HCT116 (cell line): ENCODE measurements at regions of chr6 and their contacts with region 1.

Region 1: GRCh38 chr6:106339334-106340029 is 13.9 kb upstream of the ATG5 start:
- DNase-seq: peak; percentile 57
- ATAC-seq: peak; percentile 97
- H3K4me3 ChIP-seq: peak overlapping the region in 1 of 2 experiments; percentile 13; a peak in 1 of 4 replicates
- H3K27ac ChIP-seq: no peak overlapping the region
- H3K4me1 ChIP-seq: peaks cover 4 to 13% of the 10 kb centered on the region in 2 experiments; a peak in 2 of 4 replicates
- H3K27me3 ChIP-seq: no peaks in the 10 kb centered on the region
- CTCF ChIP-seq: peak; percentile 82 to 87 (median 84); a peak in 5 of 6 replicates
- POLR2A ChIP-seq: no peak
- RAD21 ChIP-seq: peak; percentile 87

Region 2: GRCh38 chr6:106173124-106173879 is 166.2 kb before region 1 on chr6:
- CTCF ChIA-PET with region 1: no interaction called
- POLR2A ChIA-PET with region 1: no interaction called
- RAD21 ChIA-PET with region 1: no interaction called
- intact Hi-C with region 1: no loop called
- DNase-seq: no peak
- ATAC-seq: no peak
- H3K4me3 ChIP-seq: no peak overlapping the region
- H3K27ac ChIP-seq: no peak overlapping the region
- H3K4me1 ChIP-seq: no peaks in the 10 kb centered on the region
- H3K27me3 ChIP-seq: no peaks in the 10 kb centered on the region
- CTCF ChIP-seq: no peak
- POLR2A ChIP-seq: no peak
- RAD21 ChIP-seq: no peak

Region 3: DNA sequence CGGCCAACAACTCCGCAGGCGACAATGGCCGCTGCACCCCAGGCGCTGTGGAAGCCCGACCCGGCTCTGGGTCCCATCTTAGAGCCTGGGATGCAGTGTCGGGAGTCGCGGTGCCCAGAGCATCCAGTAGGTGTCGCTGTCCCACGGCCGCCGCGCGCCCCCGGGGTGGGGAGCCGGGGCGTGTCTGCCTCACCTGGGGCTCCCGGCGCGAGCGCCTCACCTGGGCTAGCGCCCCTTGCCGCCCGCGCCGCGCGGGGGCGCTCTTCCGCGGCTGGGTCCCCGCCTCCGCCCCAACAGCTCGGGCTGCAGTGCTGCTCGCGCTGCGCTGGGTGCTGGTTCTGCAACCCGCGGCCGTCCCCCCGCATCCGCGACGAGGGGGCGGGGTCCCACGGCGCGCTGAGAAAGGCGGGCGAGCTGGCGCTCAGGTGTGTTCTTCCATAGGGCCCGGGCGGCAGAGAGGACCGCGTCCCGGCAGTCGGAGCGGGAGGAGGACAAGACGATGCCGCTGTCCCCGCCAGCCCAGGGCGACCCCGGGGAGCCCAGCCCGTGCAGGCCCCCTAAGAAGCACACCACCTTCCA is 21.0 kb after region 1 on chr6 and contains the start of gene CRYBG1:
- CTCF ChIA-PET with region 1: interaction called, 17 read pairs
- POLR2A ChIA-PET with region 1: no interaction called
- RAD21 ChIA-PET with region 1: interaction called in 1 of 2 experiments, 3 read pairs
- intact Hi-C with region 1: loop called (anchors 1 kb)
- DNase-seq: peak; percentile 75
- ATAC-seq: peak; percentile 91
- H3K4me3 ChIP-seq: peak within 1 kb of the TSS; percentile 74 to 88
- H3K27ac ChIP-seq: peak within 1 kb of the TSS; percentile 64
- H3K4me1 ChIP-seq: peaks cover 5 to 17% of the 10 kb centered on the region in 2 experiments; a peak in 3 of 4 replicates
- H3K27me3 ChIP-seq: no peaks in the 10 kb centered on the region
- CTCF ChIP-seq: peak; percentile 89 to 90 (median 90)
- POLR2A ChIP-seq: no peak
- RAD21 ChIP-seq: peak; percentile 86
- total RNA-seq, gene CRYBG1: 10.7 TPM

Region 4: GRCh38 chr6:106383573-106383972 is 44.1 kb after region 1 on chr6:
- CTCF ChIA-PET with region 1: no interaction called
- POLR2A ChIA-PET with region 1: no interaction called
- RAD21 ChIA-PET with region 1: no interaction called
- intact Hi-C with region 1: no loop called
- DNase-seq: no peak
- ATAC-seq: no peak
- H3K4me3 ChIP-seq: no peak overlapping the region
- H3K27ac ChIP-seq: no peak overlapping the region
- H3K4me1 ChIP-seq: peaks cover 0 to 14% of the 10 kb centered on the region in 2 experiments; a peak in 2 of 4 replicates
- H3K27me3 ChIP-seq: no peaks in the 10 kb centered on the region
- CTCF ChIP-seq: no peak
- POLR2A ChIP-seq: no peak
- RAD21 ChIP-seq: no peak

Region 5: GRCh38 chr6:106444777-106445507 is 105.5 kb after region 1 on chr6:
- CTCF ChIA-PET with region 1: interaction called, 16 read pairs
- POLR2A ChIA-PET with region 1: no interaction called
- RAD21 ChIA-PET with region 1: no interaction called
- intact Hi-C with region 1: loop called (anchors 1 kb)
- DNase-seq: peak; percentile 45
- ATAC-seq: peak; percentile 87
- H3K4me3 ChIP-seq: no peak overlapping the region
- H3K27ac ChIP-seq: no peak overlapping the region
- H3K4me1 ChIP-seq: no peaks in the 10 kb centered on the region
- H3K27me3 ChIP-seq: no peaks in the 10 kb centered on the region
- CTCF ChIP-seq: peak; percentile 66 to 76 (median 74)
- POLR2A ChIP-seq: no peak
- RAD21 ChIP-seq: peak; percentile 75

Region 6: GRCh38 chr6:106561686-106562405 is 222.4 kb after region 1 on chr6:
- CTCF ChIA-PET with region 1: interaction called, 49 read pairs
- POLR2A ChIA-PET with region 1: interaction called, 3 read pairs
- RAD21 ChIA-PET with region 1: interaction called, 7 to 10 read pairs
- intact Hi-C with region 1: loop called (anchors 1 kb)
- DNase-seq: no peak
- ATAC-seq: 0 out of 2 replicates have a peak, but pooled peaks have one; percentile 28
- H3K4me3 ChIP-seq: no peak overlapping the region
- H3K27ac ChIP-seq: peak overlapping the region; percentile 40; the same call in 1 of the 2 replicates
- H3K4me1 ChIP-seq: peaks cover 33 to 36% of the 10 kb centered on the region in 2 experiments
- H3K27me3 ChIP-seq: no peaks in the 10 kb centered on the region
- CTCF ChIP-seq: no peak
- POLR2A ChIP-seq: no peak
- RAD21 ChIP-seq: no peak

Region 7: GRCh38 chr6:106997390-106998158 is 658.1 kb after region 1 on chr6:
- CTCF ChIA-PET with region 1: interaction called, 11 read pairs
- POLR2A ChIA-PET with region 1: no interaction called
- RAD21 ChIA-PET with region 1: interaction called, 3 read pairs
- intact Hi-C with region 1: loop called (anchors 1 kb)
- DNase-seq: peak; percentile 47
- ATAC-seq: peak; percentile 93
- H3K4me3 ChIP-seq: no peak overlapping the region
- H3K27ac ChIP-seq: no peak overlapping the region
- H3K4me1 ChIP-seq: peaks cover 0 to 5% of the 10 kb centered on the region in 2 experiments; a peak in 1 of 4 replicates
- H3K27me3 ChIP-seq: no peaks in the 10 kb centered on the region
- CTCF ChIP-seq: peak; percentile 72 to 99 (median 98); a peak in 5 of 6 replicates
- POLR2A ChIP-seq: no peak
- RAD21 ChIP-seq: peak; percentile 82

Region 8: DNA sequence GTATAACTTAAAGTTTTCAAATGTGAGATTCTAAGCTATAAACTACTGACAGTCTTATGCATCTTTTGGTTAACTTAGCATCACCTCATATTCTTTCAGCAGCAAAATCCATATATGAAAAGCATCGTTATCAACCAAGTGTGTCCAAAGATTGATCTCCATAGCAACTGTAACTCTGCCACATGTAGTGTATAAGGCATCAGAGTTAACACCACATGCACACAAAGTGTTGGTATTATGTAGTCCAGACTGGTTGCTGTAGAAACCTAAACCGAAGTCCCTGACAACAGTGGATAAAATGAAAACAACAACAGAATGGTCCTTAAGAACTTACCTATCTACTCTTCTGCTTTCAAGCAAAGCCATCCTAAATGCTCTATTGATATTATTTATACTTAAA is 1080.3 kb after region 1 on chr6:
- CTCF ChIA-PET with region 1: no interaction called
- POLR2A ChIA-PET with region 1: no interaction called
- RAD21 ChIA-PET with region 1: no interaction called
- intact Hi-C with region 1: no loop called
- DNase-seq: no peak
- ATAC-seq: no peak
- H3K4me3 ChIP-seq: no peak overlapping the region
- H3K27ac ChIP-seq: no peak overlapping the region
- H3K4me1 ChIP-seq: no peaks in the 10 kb centered on the region
- H3K27me3 ChIP-seq: no peaks in the 10 kb centered on the region
- CTCF ChIP-seq: no peak
- POLR2A ChIP-seq: no peak
- RAD21 ChIP-seq: no peak